ENCODE measurements at regions of chr5 and their contacts with region 1.

Region 1: GRCh38 chr5:148179234-148179824 is 11.0 kb downstream of the SPINK14 start:
- DNase-seq: peak; percentile 34
- H3K27ac ChIP-seq: no peak overlapping the region
- CTCF ChIP-seq: peak; percentile 90

Region 2: GRCh38 chr5:147617191-147617606 is 562.1 kb before region 1 on chr5:
- CTCF ChIA-PET with region 1: no interaction called
- POLR2A ChIA-PET with region 1: no interaction called
- DNase-seq: no peak
- H3K27ac ChIP-seq: no peak overlapping the region
- CTCF ChIP-seq: no peak

Region 3: DNA sequence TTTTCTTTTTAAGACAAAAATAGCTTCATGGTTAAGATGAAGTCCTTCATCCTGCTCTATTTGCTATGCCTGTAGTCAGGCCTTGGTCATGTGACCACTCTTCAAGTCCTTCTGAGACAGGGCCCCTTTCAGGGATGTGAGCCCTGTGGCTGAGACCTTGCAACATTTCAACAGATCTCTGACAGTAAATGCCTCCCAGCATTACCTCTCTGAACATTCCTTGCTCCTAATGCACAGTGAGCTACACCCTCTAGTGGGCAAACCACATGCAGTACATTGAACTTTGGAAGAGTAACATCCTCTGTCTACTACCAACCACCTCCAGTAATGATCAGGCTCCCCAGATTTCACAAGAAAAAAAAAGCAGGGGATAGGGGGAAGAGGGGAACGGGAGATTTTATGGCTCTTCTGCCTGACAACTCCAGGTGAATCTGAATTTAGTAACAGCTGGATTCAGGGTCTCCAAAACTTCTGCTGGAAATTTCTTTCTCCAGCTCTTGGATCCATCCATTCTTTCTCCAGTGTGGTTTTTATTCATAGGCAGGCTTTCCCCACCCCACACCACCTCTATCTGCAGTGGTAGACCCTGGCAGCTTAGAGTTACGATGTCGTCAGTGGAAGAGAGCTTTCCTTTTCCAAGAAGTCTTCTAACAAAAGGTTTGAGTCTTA is 195.5 kb after region 1 on chr5:
- CTCF ChIA-PET with region 1: interaction called, 10 read pairs
- POLR2A ChIA-PET with region 1: no interaction called
- DNase-seq: peak; percentile 74
- H3K27ac ChIP-seq: no peak overlapping the region
- CTCF ChIP-seq: peak; percentile 89